Activated CD4-positive, alpha-beta memory T cell treated with anti-CD3 and anti-CD28 coated beads for 36 hours (primary cell): ENCODE measurements at regions of chr3 and their contacts with region 1.

Region 1: DNA sequence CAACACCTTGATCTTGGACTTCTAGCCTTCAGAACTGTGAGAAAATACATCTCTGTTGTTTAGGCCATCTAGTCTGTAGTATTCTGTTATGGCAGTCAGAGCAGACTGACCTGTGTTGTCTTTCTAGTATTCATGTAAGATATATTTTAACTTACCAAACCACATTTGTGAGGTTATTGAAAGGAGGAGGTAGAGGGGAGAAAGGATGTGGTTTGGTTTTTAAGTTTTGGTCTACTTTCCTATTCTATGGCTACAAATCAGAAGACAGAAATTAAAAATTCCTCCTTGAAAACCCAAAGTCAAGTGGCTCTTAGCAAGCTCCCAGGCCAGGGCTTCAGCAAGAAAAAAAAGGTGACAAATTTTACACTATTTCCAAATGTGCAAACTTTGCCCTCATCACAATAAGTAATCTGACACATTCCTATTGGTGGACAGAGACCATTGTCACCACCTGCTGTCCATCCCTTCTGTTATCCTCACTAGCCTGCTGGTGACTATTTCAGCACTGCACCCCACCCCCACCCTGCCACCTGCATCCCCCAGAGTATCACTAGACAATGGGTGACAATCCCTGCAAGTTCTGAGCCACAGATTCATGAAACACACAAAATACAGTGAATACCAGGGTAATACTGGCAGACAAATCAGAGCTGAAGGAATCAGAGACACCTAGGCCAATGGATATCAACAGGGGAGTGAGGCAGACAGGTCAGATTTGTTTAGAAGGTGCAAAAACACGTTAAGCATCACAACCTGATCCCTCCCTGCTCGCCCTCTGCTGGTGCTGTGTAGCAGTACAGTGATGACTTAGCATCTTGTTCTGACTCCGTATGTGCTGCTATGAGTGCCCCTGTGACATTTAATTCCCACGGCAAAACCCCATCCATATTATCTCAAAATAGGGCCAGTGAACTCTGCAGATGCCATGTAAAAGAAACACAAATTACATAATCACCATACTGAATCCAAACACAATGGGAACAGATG is 79.0 kb upstream of the DCLK3 start:
- DNase-seq: peak; percentile 86
- H3K4me3 Mint-ChIP-seq: no peak overlapping the region
- H3K27ac Mint-ChIP-seq: no peak overlapping the region
- H3K4me1 Mint-ChIP-seq: peaks cover 25% of the 10 kb centered on the region
- H3K27me3 Mint-ChIP-seq: no peaks in the 10 kb centered on the region

Region 2: GRCh38 chr3:35965908-35966307 is 877.5 kb before region 1 on chr3:
- CTCF ChIA-PET with region 1: no interaction called
- POLR2A ChIA-PET with region 1: no interaction called
- intact Hi-C with region 1: loop called (anchors 10 kb)
- DNase-seq: no peak
- H3K4me3 Mint-ChIP-seq: no peak overlapping the region
- H3K27ac Mint-ChIP-seq: no peak overlapping the region
- H3K4me1 Mint-ChIP-seq: peaks cover 2% of the 10 kb centered on the region
- H3K27me3 Mint-ChIP-seq: no peaks in the 10 kb centered on the region

Region 3: GRCh38 chr3:36674816-36675215 is 168.5 kb before region 1 on chr3:
- CTCF ChIA-PET with region 1: no interaction called
- POLR2A ChIA-PET with region 1: no interaction called
- intact Hi-C with region 1: no loop called
- DNase-seq: no peak
- H3K4me3 Mint-ChIP-seq: no peak overlapping the region
- H3K27ac Mint-ChIP-seq: no peak overlapping the region
- H3K4me1 Mint-ChIP-seq: no peaks in the 10 kb centered on the region
- H3K27me3 Mint-ChIP-seq: no peaks in the 10 kb centered on the region

Region 4: DNA sequence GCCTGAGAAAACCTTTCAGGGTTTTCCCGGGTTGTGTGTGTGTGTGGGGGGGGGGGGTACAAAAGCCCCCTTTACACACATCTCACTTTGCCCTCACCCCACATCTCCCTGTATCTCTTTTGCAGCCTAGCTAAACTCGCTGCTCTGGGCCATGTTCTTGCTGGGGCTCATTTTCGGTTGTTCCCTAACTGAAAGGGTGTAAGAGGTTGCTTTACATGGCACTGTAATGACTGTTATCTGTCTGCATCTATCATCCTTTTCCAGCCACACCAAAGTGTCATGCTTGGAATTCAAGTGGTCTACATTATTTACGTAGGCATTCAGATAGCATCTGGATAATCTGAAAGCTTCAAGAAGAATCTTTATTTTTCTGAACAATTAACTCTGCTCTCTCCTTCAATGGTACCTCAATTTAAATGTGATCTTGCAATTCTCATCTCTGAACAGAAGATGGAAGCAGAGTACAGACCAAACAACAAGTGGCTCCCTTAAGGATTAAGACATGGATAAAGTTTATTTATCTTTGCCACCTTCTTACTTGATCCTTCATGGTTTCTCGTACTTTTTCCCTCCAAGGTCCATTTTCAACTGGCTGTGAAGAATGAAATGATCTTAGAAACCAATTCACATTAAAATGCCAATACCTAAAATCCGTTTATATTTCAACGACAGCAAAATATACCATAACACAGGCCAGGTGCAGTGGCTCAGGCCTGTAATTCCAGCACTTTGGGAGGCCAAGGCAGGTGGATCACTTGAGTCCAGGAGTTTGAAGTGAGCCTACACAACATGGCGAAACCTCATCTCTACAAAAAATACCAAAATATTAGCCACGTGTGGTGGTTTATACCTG is 113.9 kb before region 1 on chr3:
- CTCF ChIA-PET with region 1: no interaction called
- POLR2A ChIA-PET with region 1: no interaction called
- intact Hi-C with region 1: loop called (anchors 1 kb)
- DNase-seq: no peak
- H3K4me3 Mint-ChIP-seq: no peak overlapping the region
- H3K27ac Mint-ChIP-seq: no peak overlapping the region
- H3K4me1 Mint-ChIP-seq: no peaks in the 10 kb centered on the region
- H3K27me3 Mint-ChIP-seq: peaks cover 6% of the 10 kb centered on the region

Region 5: DNA sequence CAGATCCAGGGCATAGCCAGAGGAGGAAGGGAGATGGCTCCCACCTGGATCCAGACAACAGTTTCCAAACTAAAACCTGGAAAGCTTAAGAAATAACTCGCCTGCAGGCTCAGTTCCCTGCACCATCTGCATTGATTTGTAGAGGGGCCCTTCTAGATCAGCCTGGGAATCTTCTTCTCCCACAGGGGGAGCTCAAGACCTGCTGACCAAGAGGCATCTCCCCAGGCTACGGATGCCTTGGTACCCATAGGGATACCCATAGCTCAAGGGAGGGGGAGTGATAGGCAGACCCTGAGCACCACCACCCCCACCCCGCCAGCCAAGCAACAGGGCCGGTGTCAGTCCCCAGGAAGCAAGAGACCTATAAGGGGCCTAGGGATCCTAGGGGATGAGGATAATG is 51.0 kb before region 1 on chr3:
- CTCF ChIA-PET with region 1: interaction called, 3 read pairs
- POLR2A ChIA-PET with region 1: no interaction called
- intact Hi-C with region 1: loop called (anchors 2 kb)
- DNase-seq: peak; percentile 33
- H3K4me3 Mint-ChIP-seq: no peak overlapping the region
- H3K27ac Mint-ChIP-seq: no peak overlapping the region
- H3K4me1 Mint-ChIP-seq: no peaks in the 10 kb centered on the region
- H3K27me3 Mint-ChIP-seq: no peaks in the 10 kb centered on the region

Region 6: DNA sequence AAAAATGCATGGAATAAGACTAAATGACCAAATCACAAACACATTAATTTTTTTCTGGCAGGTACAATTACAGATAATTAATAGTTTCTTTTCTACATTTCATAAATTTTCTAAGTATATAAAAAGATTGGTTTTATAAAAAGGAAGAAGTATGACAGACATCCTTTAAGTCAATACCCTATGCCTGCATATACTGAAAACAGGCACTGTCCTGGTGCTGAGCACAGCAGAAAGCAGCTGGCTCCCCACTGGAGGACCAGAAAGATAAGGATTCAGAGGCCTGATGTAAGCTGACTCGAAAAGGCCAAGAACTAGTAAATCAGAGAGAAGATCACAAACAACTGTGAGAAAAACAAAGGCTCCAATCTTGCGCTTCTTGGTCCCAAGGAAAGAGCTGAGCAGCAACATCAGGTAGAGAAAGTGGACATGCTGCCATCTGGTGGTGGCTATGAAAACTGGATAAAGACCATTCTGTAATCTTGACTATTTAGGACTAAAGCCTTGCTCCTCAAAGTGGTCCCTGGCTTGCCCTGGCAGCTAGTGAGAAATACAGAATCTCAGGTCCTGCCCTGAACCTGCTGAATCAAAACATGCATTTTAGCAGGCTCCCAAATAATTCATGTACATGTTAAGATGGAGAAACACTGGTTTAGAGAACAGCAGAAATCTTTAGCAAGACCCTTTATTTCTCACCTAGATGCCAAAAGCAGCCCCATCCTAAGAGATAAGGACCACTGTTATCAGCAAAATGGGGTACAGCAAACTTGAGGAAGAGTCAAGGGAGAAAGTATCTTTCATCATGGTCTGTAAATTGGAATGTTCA is 25.5 kb after region 1 on chr3:
- CTCF ChIA-PET with region 1: interaction called, 17 read pairs
- POLR2A ChIA-PET with region 1: no interaction called
- intact Hi-C with region 1: loop called (anchors 2 kb)
- DNase-seq: peak; percentile 60
- H3K4me3 Mint-ChIP-seq: no peak overlapping the region
- H3K27ac Mint-ChIP-seq: no peak overlapping the region
- H3K4me1 Mint-ChIP-seq: peaks cover 23% of the 10 kb centered on the region
- H3K27me3 Mint-ChIP-seq: no peaks in the 10 kb centered on the region

Region 7: DNA sequence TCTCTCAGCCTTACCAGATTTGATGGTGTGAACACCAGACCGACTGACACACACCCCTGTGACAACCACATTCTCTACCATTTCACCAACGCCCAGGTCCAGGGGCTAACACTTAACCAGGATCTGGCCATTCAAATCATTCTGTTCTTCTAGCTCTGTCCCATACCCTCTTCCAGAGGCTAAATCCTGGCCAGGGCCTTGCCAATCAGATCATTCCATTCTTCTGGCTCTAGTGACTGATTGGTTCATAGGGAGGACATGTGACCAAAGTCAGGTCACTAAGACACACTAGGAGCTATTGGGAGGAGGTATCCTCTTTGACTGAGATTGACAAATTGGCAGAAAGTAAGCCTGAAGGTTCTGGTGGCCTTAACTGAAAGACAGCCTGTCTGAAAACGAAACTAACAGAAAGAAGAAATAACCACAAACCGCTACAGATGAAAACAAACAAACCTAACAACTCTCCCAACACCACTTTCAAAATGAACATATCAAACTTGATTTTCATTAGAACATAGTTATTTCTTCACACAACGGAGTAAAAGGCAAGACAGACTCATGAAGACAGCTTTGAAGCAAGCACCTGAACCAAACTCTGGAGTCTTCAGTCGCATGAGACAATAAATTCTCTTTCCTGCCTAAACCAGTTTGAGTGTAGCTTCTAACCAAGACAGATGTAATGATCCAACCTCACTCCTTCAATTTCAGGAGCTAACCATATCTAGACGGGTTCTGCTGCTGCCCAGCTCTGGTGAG is 33.0 kb after region 1 on chr3:
- CTCF ChIA-PET with region 1: interaction called, 4 read pairs
- POLR2A ChIA-PET with region 1: no interaction called
- intact Hi-C with region 1: loop called (anchors 1 kb)
- DNase-seq: peak; percentile 26
- H3K4me3 Mint-ChIP-seq: peak overlapping the region; percentile 21
- H3K27ac Mint-ChIP-seq: peak overlapping the region; percentile 71
- H3K4me1 Mint-ChIP-seq: peaks cover 42% of the 10 kb centered on the region
- H3K27me3 Mint-ChIP-seq: peaks cover 3% of the 10 kb centered on the region

Region 8: DNA sequence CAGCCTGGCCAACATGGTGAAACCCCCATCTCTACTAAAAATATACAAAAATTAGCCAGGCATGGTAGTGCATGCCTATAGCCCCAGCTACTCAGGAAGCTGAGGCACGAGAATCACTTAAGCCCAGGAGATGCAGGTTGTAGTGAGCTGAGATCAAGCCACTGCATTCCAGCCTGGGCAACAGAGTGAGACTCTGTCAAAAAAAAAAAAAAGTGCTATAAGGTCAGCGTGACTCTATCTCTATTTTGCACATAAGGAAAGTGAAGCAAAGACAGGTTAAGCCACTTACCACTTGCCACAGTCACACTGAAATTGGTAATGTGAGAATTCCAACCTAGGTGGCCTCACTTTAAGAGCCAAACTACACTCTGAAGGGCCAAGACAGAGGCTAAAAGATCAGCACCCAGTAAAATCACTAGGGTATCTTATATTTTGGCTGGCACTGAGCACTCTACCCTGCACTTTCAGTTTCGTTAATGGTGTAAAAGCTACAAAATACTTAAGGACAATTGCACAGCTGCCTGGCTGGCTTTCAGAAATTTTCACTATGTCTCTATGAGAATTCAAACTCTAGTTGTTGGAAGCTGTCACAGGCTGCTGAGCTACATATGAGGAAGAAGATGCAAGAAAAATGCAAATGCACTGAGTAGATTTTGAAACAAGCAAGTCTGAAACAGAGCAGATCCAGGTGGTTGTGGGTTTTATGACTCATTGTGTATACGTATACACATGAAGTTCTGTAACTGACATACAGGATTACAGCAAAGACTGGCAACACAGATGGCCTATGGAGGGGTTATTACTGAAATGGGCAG is 68.8 kb after region 1 on chr3:
- CTCF ChIA-PET with region 1: no interaction called
- POLR2A ChIA-PET with region 1: no interaction called
- intact Hi-C with region 1: loop called (anchors 2 kb)
- DNase-seq: peak; percentile 47
- H3K4me3 Mint-ChIP-seq: peak overlapping the region; percentile 59
- H3K27ac Mint-ChIP-seq: peak overlapping the region; percentile 81
- H3K4me1 Mint-ChIP-seq: peaks cover 41% of the 10 kb centered on the region
- H3K27me3 Mint-ChIP-seq: no peaks in the 10 kb centered on the region